PC-3 (cell line): ENCODE measurements at regions of chr3 and their contacts with region 1.

Region 1: GRCh38 chr3:16600780-16601539 is 4.3 kb downstream of the DAZL start:
- DNase-seq: peak; percentile 87
- ATAC-seq: peak; percentile 84
- H3K4me3 ChIP-seq: peak overlapping the region; percentile 26; the same call in 1 of the 2 replicates
- H3K27ac ChIP-seq: no peak overlapping the region
- H3K4me1 ChIP-seq: peaks cover 17% of the 10 kb centered on the region
- H3K27me3 ChIP-seq: no peaks in the 10 kb centered on the region
- CTCF ChIP-seq: peak; percentile 87

Region 2: GRCh38 chr3:16570113-16570512 is 30.8 kb before region 1 on chr3:
- CTCF ChIA-PET with region 1: no interaction called
- POLR2A ChIA-PET with region 1: no interaction called
- intact Hi-C with region 1: no loop called
- DNase-seq: peak; percentile 41
- ATAC-seq: peak; percentile 96
- H3K4me3 ChIP-seq: no peak overlapping the region
- H3K27ac ChIP-seq: peak overlapping the region; percentile 40
- H3K4me1 ChIP-seq: peaks cover 7% of the 10 kb centered on the region
- H3K27me3 ChIP-seq: no peaks in the 10 kb centered on the region
- CTCF ChIP-seq: no peak

Region 3: GRCh38 chr3:16808393-16809107 is 207.6 kb after region 1 on chr3:
- CTCF ChIA-PET with region 1: no interaction called
- POLR2A ChIA-PET with region 1: no interaction called
- intact Hi-C with region 1: loop called (anchors 5 kb)
- DNase-seq: peak; percentile 22
- ATAC-seq: peak; percentile 18; the same call in 1 of the 2 replicates
- H3K4me3 ChIP-seq: no peak overlapping the region
- H3K27ac ChIP-seq: no peak overlapping the region
- H3K4me1 ChIP-seq: no peaks in the 10 kb centered on the region
- H3K27me3 ChIP-seq: no peaks in the 10 kb centered on the region
- CTCF ChIP-seq: peak; percentile 24; the same call in 1 of the 2 replicates

Region 4: DNA sequence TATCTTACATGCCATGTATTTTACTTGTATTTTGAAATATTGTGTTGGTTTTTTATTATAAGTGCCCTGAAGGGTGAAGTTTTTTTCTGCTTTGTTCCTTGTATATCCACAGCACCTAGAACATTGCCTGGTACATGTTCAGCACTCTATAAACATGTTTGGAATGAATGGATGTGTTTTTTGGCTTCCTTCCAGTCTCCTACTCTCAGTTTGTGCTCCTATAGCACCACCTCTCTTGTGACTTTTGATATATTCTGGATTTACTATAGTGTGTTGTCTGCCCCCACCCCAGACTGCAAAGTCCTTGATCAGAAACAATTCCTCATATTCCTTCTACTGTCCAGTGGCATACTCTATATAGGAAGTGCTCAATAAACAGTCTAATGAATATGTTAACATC is 344.4 kb after region 1 on chr3:
- CTCF ChIA-PET with region 1: no interaction called
- POLR2A ChIA-PET with region 1: no interaction called
- intact Hi-C with region 1: loop called (anchors 5 kb)
- DNase-seq: peak; percentile 24
- ATAC-seq: no peak; the same call in 1 of the 2 replicates
- H3K4me3 ChIP-seq: no peak overlapping the region
- H3K27ac ChIP-seq: no peak overlapping the region
- H3K4me1 ChIP-seq: no peaks in the 10 kb centered on the region
- H3K27me3 ChIP-seq: no peaks in the 10 kb centered on the region
- CTCF ChIP-seq: peak; percentile 24; the same call in 1 of the 2 replicates

Region 5: GRCh38 chr3:17233398-17233800 is 632.4 kb after region 1 on chr3:
- CTCF ChIA-PET with region 1: interaction called, 6 read pairs
- POLR2A ChIA-PET with region 1: no interaction called
- intact Hi-C with region 1: loop called (anchors 1 kb)
- DNase-seq: peak; percentile 97
- ATAC-seq: peak; percentile 99
- H3K4me3 ChIP-seq: no peak overlapping the region
- H3K27ac ChIP-seq: no peak overlapping the region
- H3K4me1 ChIP-seq: peaks cover 18% of the 10 kb centered on the region
- H3K27me3 ChIP-seq: no peaks in the 10 kb centered on the region
- CTCF ChIP-seq: peak; percentile 93

Region 6: GRCh38 chr3:17491601-17492000 is 890.6 kb after region 1 on chr3:
- CTCF ChIA-PET with region 1: no interaction called
- POLR2A ChIA-PET with region 1: no interaction called
- intact Hi-C with region 1: no loop called
- DNase-seq: peak; percentile 73
- ATAC-seq: no peak
- H3K4me3 ChIP-seq: no peak overlapping the region
- H3K27ac ChIP-seq: peak overlapping the region; percentile 33; the same call in 1 of the 2 replicates
- H3K4me1 ChIP-seq: peaks cover 21% of the 10 kb centered on the region
- H3K27me3 ChIP-seq: no peaks in the 10 kb centered on the region
- CTCF ChIP-seq: no peak